ENCODE measurements at regions of chr5 and their contacts with region 1.

Region 1: GRCh38 chr5:139458580-139459406 is 3.8 kb downstream of the ECSCR start:
- DNase-seq: peak; percentile 77
- H3K4me3 Mint-ChIP-seq: peak overlapping the region; percentile 72
- H3K27ac Mint-ChIP-seq: peak overlapping the region; percentile 99
- H3K4me1 Mint-ChIP-seq: peaks cover 59% of the 10 kb centered on the region
- H3K27me3 Mint-ChIP-seq: no peaks in the 10 kb centered on the region

Region 2: DNA sequence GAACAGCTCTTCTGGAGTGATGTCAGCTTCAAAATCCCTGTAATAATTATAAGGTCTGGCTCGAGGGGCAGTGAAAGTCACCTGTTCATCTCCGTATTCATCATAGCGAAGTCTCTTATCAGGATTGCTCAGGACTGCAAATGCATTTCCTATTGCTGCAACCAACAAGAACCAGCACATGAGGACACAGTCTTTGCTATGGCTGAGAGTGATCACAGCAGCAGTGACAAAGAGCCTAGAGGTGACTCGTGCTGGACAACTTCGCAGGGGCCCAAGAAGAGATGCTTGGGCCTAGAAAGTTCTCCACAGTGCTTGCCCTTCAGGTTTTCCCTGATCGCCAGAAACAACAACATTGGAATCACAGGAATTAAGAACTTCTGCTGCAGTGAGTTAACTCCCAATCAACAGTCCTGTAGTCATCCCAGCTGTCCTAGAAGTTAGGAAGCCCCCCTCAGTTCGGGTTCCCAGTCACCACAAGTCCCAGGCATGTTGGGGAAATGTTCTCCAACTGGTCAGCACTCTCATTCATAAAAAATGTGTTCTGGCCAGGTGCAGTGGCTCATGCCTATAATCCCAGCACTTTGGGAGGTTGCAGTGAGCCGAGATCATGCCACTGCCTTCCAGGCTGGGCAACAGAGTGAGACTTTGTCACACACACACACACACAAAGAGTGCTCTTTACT is 32.4 kb before region 1 on chr5:
- intact Hi-C with region 1: no loop called
- DNase-seq: no peak
- H3K4me3 Mint-ChIP-seq: no peak overlapping the region
- H3K27ac Mint-ChIP-seq: no peak overlapping the region
- H3K4me1 Mint-ChIP-seq: peaks cover 23% of the 10 kb centered on the region
- H3K27me3 Mint-ChIP-seq: no peaks in the 10 kb centered on the region

Region 3: DNA sequence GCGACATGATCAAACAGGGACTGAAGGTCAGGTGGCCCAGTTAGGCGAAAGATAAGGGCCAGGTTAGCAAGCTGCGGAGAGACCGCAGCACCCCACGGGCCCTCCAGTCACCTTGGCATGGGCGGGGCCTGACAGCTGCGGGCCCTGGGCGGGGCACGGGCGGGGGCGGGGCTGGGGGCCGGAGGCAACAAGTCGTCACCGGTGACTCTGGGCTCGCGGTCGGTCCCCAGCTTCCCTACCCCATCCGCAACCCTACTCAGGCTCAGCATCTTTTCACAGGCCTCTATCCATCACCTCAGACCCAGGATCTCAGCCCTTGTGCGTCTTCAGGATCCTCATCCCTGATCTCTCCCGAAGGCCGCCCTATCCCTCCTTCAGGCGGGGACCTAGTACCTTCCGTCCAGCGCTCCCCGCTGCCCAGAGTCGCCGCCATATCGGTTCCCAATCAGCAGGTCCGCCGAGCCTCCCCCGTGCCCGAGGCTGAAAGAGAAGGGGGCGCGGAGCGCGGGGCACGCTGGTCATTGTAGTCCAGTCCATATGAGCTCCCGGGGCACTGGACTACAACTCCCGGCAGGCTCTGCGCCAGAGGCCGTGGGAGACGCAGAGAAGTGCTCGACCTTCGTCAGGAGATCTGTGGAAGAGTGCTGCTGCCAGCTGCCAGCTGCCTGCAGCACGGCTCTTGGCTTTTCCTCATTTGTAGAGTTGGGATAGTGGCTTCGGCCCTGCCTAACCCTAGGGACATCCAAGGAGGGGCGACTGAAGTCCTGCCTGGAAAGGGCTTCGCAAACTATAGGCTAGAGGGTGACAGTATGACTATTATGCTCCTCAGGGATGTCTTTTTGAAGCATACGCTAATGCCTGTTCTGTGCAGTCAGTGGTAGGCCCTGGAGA is 19.5 kb before region 1 on chr5 and contains the start of gene DNAJC18:
- intact Hi-C with region 1: loop called (anchors 1 kb)
- DNase-seq: peak; percentile 84
- H3K4me3 Mint-ChIP-seq: peak within 1 kb of the TSS; percentile 93
- H3K27ac Mint-ChIP-seq: peak within 1 kb of the TSS; percentile 98
- H3K4me1 Mint-ChIP-seq: peaks cover 58% of the 10 kb centered on the region
- H3K27me3 Mint-ChIP-seq: no peaks in the 10 kb centered on the region
- total RNA-seq, gene DNAJC18: 29.8 and 35.8 TPM in 2 replicates

Region 4: GRCh38 chr5:139446956-139447779 is 11.6 kb before region 1 on chr5:
- intact Hi-C with region 1: loop called (anchors 1 kb)
- DNase-seq: no peak
- H3K4me3 Mint-ChIP-seq: peak overlapping the region; percentile 53
- H3K27ac Mint-ChIP-seq: peak overlapping the region; percentile 96
- H3K4me1 Mint-ChIP-seq: peaks cover 55% of the 10 kb centered on the region
- H3K27me3 Mint-ChIP-seq: no peaks in the 10 kb centered on the region

Region 5: GRCh38 chr5:139482050-139482889 is 23.5 kb after region 1 on chr5 and contains the start of gene STING1:
- intact Hi-C with region 1: loop called (anchors 1 kb)
- DNase-seq: peak; percentile 55
- H3K4me3 Mint-ChIP-seq: peak within 1 kb of the TSS; percentile 88
- H3K27ac Mint-ChIP-seq: peak within 1 kb of the TSS; percentile 99
- H3K4me1 Mint-ChIP-seq: peaks cover 30% of the 10 kb centered on the region
- H3K27me3 Mint-ChIP-seq: no peaks in the 10 kb centered on the region
- total RNA-seq, gene STING1: 167 and 169 TPM in 2 replicates

Region 6: DNA sequence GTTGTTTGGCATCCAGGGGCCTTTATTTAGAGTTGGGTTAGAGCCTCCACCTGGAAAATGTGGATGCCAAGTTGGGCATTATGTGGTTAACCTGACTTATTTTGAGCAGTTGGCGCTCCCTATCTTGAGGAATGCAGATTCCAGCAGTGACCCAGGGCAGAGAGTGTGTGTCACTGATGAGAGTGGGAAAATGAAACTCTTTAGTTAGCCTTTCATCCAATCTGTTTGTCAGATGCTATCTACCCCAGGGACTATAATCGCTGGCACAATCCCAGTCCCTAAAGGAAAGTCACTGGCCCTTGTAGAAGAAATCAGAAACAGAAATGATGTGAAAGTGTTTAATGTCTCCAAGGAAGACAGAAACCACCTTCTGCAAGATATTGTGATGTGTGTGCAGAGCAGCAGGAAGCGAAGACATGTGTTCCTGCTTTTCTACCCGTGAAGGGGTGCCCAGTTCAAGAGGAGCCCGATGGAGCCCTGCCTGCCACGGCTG is 34.0 kb after region 1 on chr5:
- intact Hi-C with region 1: no loop called
- DNase-seq: no peak
- H3K4me3 Mint-ChIP-seq: no peak overlapping the region
- H3K27ac Mint-ChIP-seq: no peak overlapping the region
- H3K4me1 Mint-ChIP-seq: peaks cover 33% of the 10 kb centered on the region
- H3K27me3 Mint-ChIP-seq: no peaks in the 10 kb centered on the region

Region 7: DNA sequence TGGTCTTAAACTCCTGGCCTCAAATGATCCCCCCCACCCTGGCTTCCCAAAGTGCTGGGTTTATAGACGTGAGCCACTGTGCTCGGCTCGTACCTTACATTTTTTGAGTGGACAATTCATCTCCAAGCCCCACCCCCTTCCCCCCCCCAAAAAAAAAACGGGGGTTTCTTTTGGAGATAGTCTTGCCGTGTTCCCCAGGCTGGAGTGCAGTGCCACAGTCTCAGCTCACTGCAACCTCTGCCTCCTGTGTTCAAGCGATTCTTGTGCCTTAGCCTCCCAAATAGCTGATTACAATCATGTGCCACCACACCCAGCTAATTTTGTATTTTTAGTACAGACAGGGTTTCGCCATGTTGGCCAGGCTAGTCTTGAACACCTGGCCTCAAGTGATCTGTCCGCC is 974.1 kb after region 1 on chr5:
- intact Hi-C with region 1: no loop called
- DNase-seq: no peak
- H3K4me3 Mint-ChIP-seq: no peak overlapping the region
- H3K27ac Mint-ChIP-seq: no peak overlapping the region
- H3K4me1 Mint-ChIP-seq: peaks cover 17% of the 10 kb centered on the region
- H3K27me3 Mint-ChIP-seq: no peaks in the 10 kb centered on the region

Measured in activated T-helper 2 cell treated with anti-CD3 and anti-CD28 coated beads, Interferon-gamma antibody, Interleukin-2, Interleukin-4, amounts not matched to agents 10 μg/mL and 5 μg/mL and 100 μg/mL, durations not matched to agents 14 hours and 24 hours and 36 hours (primary cell).